ENCODE measurements at regions of chr7 and their contacts with region 1.

Region 1: GRCh38 chr7:142478479-142479072 is 220.7 kb upstream of the PRSS58 start:
- H3K4me3 ChIP-seq: no peak overlapping the region
- H3K27ac ChIP-seq: no peak overlapping the region
- H3K4me1 ChIP-seq: no peaks in the 10 kb centered on the region
- CTCF ChIP-seq: no peak

Region 2: GRCh38 chr7:142385491-142386340 is 92.9 kb before region 1 on chr7:
- CTCF ChIA-PET with region 1: interaction called, 11 read pairs
- POLR2A ChIA-PET with region 1: no interaction called
- H3K4me3 ChIP-seq: no peak overlapping the region
- H3K27ac ChIP-seq: no peak overlapping the region
- H3K4me1 ChIP-seq: no peaks in the 10 kb centered on the region
- CTCF ChIP-seq: peak; percentile 48

Region 3: DNA sequence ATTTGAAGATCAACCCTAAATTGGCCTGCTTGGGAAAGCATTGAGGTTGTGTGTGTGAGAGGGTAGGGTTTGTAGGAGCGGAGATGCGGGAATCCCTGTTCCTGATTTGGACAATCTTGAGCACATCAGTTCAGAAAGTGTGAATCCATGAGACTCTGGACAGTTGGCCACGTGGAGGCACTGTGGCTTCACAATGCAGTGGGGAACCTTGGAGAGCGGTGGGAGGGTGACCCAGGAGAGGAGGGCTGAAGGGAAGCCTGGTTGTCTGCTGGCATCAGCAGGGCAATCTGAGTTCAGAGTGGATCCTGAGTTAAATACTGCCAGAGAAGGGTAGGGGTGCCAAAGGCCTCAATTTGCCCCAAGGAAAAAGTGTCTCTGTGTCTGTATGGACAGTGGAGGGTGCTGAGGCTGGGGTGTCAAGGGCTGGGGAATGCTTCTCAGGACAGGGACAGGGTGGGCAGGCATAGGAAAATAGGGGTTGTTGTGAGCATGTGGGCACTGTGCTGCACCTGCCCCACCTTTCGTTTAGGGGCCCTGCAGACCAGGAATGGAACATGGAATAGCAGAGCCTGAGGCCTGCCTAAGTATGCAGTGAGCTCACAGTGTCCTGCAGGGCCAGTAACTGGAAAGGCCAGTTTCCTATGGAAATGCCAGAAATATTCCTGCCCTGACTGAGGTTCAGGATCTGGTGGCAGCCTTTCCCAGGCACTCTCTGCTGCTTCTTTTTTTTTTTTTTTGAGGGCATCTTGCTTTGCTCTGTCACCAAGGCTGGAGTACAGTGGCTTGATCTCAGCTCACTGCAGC is 57.8 kb before region 1 on chr7:
- CTCF ChIA-PET with region 1: interaction called, 10 read pairs
- POLR2A ChIA-PET with region 1: no interaction called
- H3K4me3 ChIP-seq: no peak overlapping the region
- H3K27ac ChIP-seq: no peak overlapping the region
- H3K4me1 ChIP-seq: no peaks in the 10 kb centered on the region
- CTCF ChIP-seq: peak; percentile 56

Region 4: GRCh38 chr7:142445019-142445686 is 33.4 kb before region 1 on chr7:
- CTCF ChIA-PET with region 1: interaction called, 11 read pairs
- POLR2A ChIA-PET with region 1: no interaction called
- H3K4me3 ChIP-seq: no peak overlapping the region
- H3K27ac ChIP-seq: no peak overlapping the region
- H3K4me1 ChIP-seq: no peaks in the 10 kb centered on the region
- CTCF ChIP-seq: no peak

Region 5: DNA sequence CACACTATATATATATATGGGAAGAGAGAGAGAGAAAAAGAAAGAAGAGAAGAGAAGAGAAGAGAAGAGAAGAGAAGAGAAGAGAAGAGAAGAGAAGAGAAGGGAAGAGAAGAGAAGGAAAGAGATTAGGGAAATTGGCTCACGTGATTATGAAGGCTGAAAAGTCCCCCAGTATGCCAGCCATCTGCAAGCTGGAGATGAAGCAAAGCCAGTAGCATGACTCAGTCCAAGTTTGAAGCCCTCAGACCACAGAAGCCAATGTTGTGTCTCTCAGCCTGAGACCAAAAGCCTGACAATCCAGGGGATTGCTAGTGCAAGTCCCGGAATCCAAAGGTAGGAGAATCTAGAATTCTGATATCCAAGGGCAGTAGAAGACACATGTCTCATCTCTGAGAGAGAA is 64.4 kb after region 1 on chr7:
- CTCF ChIA-PET with region 1: no interaction called
- POLR2A ChIA-PET with region 1: no interaction called
- H3K4me3 ChIP-seq: no peak overlapping the region
- H3K27ac ChIP-seq: no peak overlapping the region
- H3K4me1 ChIP-seq: no peaks in the 10 kb centered on the region
- CTCF ChIP-seq: no peak

Region 6: GRCh38 chr7:142603870-142604448 is 125.4 kb after region 1 on chr7:
- CTCF ChIA-PET with region 1: no interaction called
- POLR2A ChIA-PET with region 1: no interaction called
- H3K4me3 ChIP-seq: no peak overlapping the region
- H3K27ac ChIP-seq: no peak overlapping the region
- H3K4me1 ChIP-seq: no peaks in the 10 kb centered on the region
- CTCF ChIP-seq: peak; percentile 40; the same call in 1 of the 2 replicates